ENCODE measurements at regions of chr20 and their contacts with region 1.

Region 1: DNA sequence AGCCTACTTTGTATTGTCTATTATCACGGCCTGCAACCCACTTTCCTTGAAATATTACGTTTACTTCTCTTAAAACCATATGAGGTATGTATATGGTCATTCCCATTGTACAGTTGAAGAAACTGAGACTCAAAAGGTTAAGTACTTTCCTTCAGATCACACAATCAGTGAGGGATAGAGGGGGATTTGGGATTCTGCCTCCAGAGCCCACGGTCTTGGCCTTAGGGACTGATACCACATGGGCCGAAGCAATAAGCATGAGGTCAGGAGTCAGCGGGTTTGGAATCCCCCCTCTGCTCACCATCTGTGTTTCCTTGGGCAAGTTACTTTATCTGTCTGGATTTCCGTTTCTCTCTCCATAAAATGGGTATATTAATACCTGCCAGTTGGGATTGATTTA is 19.4 kb upstream of the EPB41L1 start:
- DNase-seq: peak in 1 of 5 donors; percentile 12
- H3K4me3 ChIP-seq: no peak overlapping the region
- H3K27ac ChIP-seq: peak overlapping the region in 1 of 2 donors; percentile 3
- H3K4me1 ChIP-seq: peaks cover 0 to 4% (median 4%) of the 10 kb centered on the region in 3 donors
- H3K27me3 ChIP-seq: no peaks in the 10 kb centered on the region
- CTCF ChIP-seq: no peak

Region 2: GRCh38 chr20:35329435-35330139 is 805.6 kb before region 1 on chr20:
- intact Hi-C with region 1: no loop called
- DNase-seq: no peak
- H3K4me3 ChIP-seq: no peak overlapping the region
- H3K27ac ChIP-seq: no peak overlapping the region
- H3K4me1 ChIP-seq: peaks cover 2 to 10% (median 6%) of the 10 kb centered on the region in 3 donors
- H3K27me3 ChIP-seq: no peaks in the 10 kb centered on the region
- CTCF ChIP-seq: peak; percentile 41

Region 3: GRCh38 chr20:35994994-35995453 is 140.1 kb before region 1 on chr20:
- intact Hi-C with region 1: loop called (anchors 5 kb)
- DNase-seq: peak; percentile 89 to 92 (median 91)
- H3K4me3 ChIP-seq: no peak overlapping the region
- H3K27ac ChIP-seq: no peak overlapping the region
- H3K4me1 ChIP-seq: no peaks in the 10 kb centered on the region
- H3K27me3 ChIP-seq: no peaks in the 10 kb centered on the region
- CTCF ChIP-seq: peak; percentile 86

Measured in kidney (tissue), 22 donors.